ENCODE measurements at regions of chr15 and their contacts with region 1.

Region 1: DNA sequence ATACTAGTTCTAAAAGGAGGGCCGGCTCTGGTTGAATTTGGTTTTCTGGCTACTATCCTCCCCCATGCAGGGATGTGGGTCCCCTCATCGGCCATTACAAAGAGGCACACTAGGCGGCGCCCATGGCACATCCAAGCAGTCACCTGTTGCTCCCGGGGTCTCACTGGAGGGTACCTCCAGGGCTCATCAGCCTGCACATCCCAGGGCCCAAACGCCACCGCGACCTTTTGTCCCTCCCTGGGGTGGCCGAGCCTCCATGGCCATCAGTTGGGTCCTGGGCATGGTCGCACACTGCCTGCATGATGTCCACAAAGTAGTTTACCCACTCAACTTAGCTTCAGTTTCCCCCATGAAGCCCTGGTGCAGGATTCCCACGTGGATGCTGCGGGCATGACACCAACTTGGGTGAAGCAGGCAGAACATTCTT is 28.3 kb downstream of the IDH3A start:
- DNase-seq: peak in 7 of 10 donors; percentile 36 to 92 (median 72)

Region 2: DNA sequence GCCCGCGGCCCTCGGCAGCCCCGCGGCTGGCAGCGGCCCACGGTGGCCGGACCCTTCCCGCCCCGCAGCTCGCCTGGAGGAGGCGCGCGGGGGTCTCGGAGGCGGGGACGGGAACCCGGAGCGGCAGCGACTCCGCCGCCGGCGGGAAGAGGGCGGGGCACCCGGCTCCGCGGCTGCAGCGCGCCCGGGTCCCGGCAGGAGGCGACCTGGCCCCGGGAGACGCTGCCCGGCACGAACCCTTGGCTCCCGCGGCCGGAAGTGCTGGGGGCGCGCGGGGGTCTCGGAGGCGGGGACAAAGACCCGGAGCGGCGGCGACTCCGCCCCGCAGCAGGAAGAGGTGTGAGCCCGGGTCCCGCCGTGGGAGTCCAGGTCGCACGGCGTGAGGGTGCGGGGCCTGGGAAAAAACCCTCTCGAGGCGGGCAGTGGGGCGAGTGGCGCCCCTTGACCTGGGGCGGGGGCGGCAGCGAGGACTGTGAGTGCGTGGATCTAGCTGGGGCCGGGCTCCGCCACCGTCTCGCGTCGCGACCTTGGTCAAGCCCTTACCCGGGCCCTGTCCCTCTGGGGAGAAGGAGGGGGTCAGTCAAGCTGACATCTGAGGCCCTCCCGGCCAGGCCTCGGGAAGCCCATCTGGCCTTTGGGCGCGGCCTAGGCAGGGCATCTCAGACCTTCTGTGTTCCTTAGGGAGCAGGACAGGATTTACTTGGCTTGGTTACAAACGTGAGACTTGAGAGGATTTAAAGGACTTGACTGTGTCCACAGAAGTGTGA is 46.0 kb before region 1 on chr15 and contains the start of gene CIB2:
- intact Hi-C with region 1: loop called (anchors 5 kb)
- DNase-seq: peak; percentile 27 to 94 (median 53)